A673 (cell line): ENCODE measurements at regions of chr7 and their contacts with region 1.

Region 1: GRCh38 chr7:114085592-114086501 is 167.0 kb upstream of the PPP1R3A start:
- DNase-seq: peak; percentile 73
- H3K4me3 ChIP-seq: peak overlapping the region; percentile 52
- H3K27ac ChIP-seq: no peak overlapping the region
- H3K4me1 ChIP-seq: peaks cover 13% of the 10 kb centered on the region
- H3K27me3 ChIP-seq: peaks cover 99% of the 10 kb centered on the region
- CTCF ChIP-seq: no peak

Region 2: GRCh38 chr7:114107522-114107921 is 21.7 kb after region 1 on chr7:
- CTCF ChIA-PET with region 1: no interaction called
- POLR2A ChIA-PET with region 1: no interaction called
- intact Hi-C with region 1: no loop called
- DNase-seq: no peak
- H3K4me3 ChIP-seq: no peak overlapping the region
- H3K27ac ChIP-seq: no peak overlapping the region
- H3K4me1 ChIP-seq: no peaks in the 10 kb centered on the region
- H3K27me3 ChIP-seq: peaks cover 26% of the 10 kb centered on the region
- CTCF ChIP-seq: no peak

Region 3: DNA sequence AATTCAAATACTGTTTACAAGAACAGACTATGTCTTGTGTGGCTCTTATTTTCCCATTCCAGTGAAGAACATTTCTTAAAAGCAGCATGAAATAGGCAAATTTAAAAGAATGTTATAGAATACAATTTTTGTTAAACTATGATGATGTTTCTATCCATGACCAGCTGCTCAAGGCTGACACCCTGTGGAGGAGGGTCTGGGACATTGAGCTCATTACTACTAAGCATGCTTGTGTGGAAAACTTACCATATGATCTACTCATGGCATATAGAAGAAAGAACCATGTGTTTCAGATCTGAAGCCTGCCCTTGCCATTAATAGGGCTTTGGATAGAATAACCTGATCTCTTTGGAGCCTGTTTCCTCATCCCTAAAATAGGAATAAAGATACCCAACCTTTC is 453.7 kb after region 1 on chr7:
- CTCF ChIA-PET with region 1: no interaction called
- POLR2A ChIA-PET with region 1: no interaction called
- intact Hi-C with region 1: loop called (anchors 10 kb)
- DNase-seq: peak; percentile 26
- H3K4me3 ChIP-seq: no peak overlapping the region
- H3K27ac ChIP-seq: no peak overlapping the region
- H3K4me1 ChIP-seq: no peaks in the 10 kb centered on the region
- H3K27me3 ChIP-seq: peaks cover 93% of the 10 kb centered on the region
- CTCF ChIP-seq: peak; percentile 44; the same call in 1 of the 2 replicates

Region 4: GRCh38 chr7:115679976-115680375 is 1594.1 kb after region 1 on chr7:
- CTCF ChIA-PET with region 1: no interaction called
- POLR2A ChIA-PET with region 1: no interaction called
- intact Hi-C with region 1: loop called (anchors 5 kb)
- DNase-seq: peak; percentile 92
- H3K4me3 ChIP-seq: no peak overlapping the region
- H3K27ac ChIP-seq: no peak overlapping the region
- H3K4me1 ChIP-seq: peaks cover 34% of the 10 kb centered on the region
- H3K27me3 ChIP-seq: no peaks in the 10 kb centered on the region
- CTCF ChIP-seq: peak; percentile 72

Region 5: GRCh38 chr7:115851291-115851690 is 1765.4 kb after region 1 on chr7:
- CTCF ChIA-PET with region 1: interaction called, 5 read pairs
- POLR2A ChIA-PET with region 1: no interaction called
- intact Hi-C with region 1: loop called (anchors 5 kb)
- DNase-seq: peak; percentile 78
- H3K4me3 ChIP-seq: no peak overlapping the region
- H3K27ac ChIP-seq: no peak overlapping the region
- H3K4me1 ChIP-seq: no peaks in the 10 kb centered on the region
- H3K27me3 ChIP-seq: peaks cover 7% of the 10 kb centered on the region
- CTCF ChIP-seq: peak; percentile 67